ENCODE measurements at regions of chr1 and their contacts with region 1.

Region 1: DNA sequence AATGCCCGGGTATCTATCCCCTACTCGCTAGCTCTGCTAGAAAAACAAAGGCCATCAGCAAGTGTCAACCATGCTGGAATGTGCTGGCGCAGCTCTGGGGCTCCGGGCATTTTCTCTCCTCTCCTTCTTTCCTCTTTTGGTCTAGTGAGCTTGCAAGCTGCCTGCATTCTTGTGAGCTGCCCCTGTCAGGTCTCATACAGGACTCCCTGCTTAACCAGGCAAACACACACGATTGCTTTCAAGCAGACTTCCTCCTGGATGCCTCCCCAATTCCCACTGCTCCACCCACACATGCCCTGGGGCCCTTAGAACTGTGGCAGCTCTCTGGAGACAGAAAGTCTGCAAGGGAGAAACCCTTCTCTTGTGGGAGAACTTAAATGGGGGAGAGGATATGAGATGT is 35.7 kb upstream of the SUCO start:
- DNase-seq: peak; percentile 41
- H3K4me3 ChIP-seq: no peak overlapping the region
- H3K27ac ChIP-seq: no peak overlapping the region
- H3K4me1 ChIP-seq: peaks cover 19% of the 10 kb centered on the region
- H3K27me3 ChIP-seq: no peaks in the 10 kb centered on the region
- CTCF ChIP-seq: no peak

Region 2: DNA sequence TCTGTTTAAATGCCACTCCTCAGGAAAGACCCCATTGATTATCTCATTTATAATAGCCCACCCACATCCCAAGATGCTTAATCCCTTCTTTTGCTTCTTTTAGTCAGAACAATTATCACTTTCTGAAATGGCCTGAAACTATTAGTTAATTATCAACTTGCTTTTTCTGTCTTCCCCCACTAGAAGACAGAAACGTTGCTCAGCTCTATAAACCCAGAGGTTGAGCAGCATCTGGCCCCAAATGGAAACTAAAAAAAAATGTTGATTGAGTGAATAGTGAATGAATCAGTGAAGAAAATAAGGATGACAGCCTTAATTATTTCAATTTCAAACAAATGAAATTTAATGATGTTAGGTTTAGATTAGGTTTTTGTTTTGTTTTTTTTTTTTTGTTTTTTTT is 15.2 kb before region 1 on chr1:
- CTCF ChIA-PET with region 1: no interaction called
- dilution Hi-C with region 1: no loop called
- in situ Hi-C with region 1: no loop called
- intact Hi-C with region 1: loop called (anchors 2 kb)
- DNase-seq: no peak
- H3K4me3 ChIP-seq: no peak overlapping the region
- H3K27ac ChIP-seq: no peak overlapping the region
- H3K4me1 ChIP-seq: peaks cover 26% of the 10 kb centered on the region
- H3K27me3 ChIP-seq: no peaks in the 10 kb centered on the region
- CTCF ChIP-seq: no peak

Measured in mammary epithelial cell (primary cell).